ENCODE measurements at regions of chr14 and their contacts with region 1.

Region 1: GRCh38 chr14:24875991-24876878 is 173.7 kb downstream of the STXBP6 start:
- DNase-seq: no peak
- ATAC-seq: no peak
- H3K4me3 ChIP-seq: no peak overlapping the region
- H3K27ac ChIP-seq: no peak overlapping the region
- H3K4me1 ChIP-seq: peaks cover 69% of the 10 kb centered on the region
- H3K27me3 ChIP-seq: no peaks in the 10 kb centered on the region
- CTCF ChIP-seq: no peak
- EP300 ChIP-seq: no peak
- POLR2A ChIP-seq: no peak
- RAD21 ChIP-seq: no peak

Region 2: GRCh38 chr14:24887623-24888293 is 11.5 kb after region 1 on chr14:
- CTCF ChIA-PET with region 1: no interaction called
- POLR2A ChIA-PET with region 1: interaction called, 6 read pairs
- in situ Hi-C with region 1: no loop called
- intact Hi-C with region 1: loop called (anchors 1 kb)
- DNase-seq: no peak
- ATAC-seq: no peak
- H3K4me3 ChIP-seq: no peak overlapping the region
- H3K27ac ChIP-seq: no peak overlapping the region
- H3K4me1 ChIP-seq: peaks cover 49% of the 10 kb centered on the region
- H3K27me3 ChIP-seq: no peaks in the 10 kb centered on the region
- CTCF ChIP-seq: no peak
- EP300 ChIP-seq: no peak; a peak in 1 of 4 replicates
- POLR2A ChIP-seq: no peak
- RAD21 ChIP-seq: no peak

Region 3: DNA sequence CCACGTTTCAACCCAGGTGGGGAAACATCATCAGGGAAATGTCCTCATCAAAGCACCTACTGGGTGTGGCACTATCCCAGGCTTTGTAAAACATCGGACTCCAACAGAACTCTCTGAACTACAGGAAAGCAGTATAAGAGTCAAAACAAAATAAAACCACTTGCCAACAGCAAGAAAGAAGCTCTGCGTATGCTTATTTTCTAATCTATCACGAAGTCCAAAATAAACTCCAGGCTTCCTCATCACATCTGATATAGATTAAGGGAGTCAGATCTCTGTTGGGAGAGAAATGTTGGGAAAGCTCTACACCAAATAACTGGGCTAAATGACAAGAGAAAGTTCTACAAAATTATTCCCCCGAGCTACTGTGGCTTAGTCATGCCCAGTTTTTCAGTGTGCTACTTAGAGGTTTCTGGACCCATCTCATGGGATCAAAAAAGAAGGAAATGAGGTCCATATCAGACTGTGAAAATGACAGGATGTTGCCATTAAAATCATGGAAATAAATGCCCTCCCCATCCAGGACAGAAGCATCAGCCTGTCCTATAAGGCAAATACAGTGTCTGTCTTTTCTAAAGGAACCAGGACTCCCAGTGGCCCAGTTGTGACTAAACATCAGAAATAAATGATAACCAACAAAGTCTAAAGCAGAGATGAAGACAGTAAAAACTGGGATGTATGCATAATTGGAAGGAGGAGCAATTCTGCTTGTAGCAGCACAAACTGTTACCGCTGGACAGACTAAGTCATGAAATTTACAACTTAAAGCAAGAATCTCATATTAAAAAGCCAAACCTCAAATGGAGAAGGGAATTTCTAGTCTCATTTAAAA is 24.2 kb after region 1 on chr14:
- CTCF ChIA-PET with region 1: no interaction called
- POLR2A ChIA-PET with region 1: no interaction called
- in situ Hi-C with region 1: no loop called
- intact Hi-C with region 1: no loop called
- DNase-seq: no peak
- ATAC-seq: no peak
- H3K4me3 ChIP-seq: no peak overlapping the region
- H3K27ac ChIP-seq: no peak overlapping the region
- H3K4me1 ChIP-seq: peaks cover 6% of the 10 kb centered on the region; the same call in 1 of the 2 replicates
- H3K27me3 ChIP-seq: no peaks in the 10 kb centered on the region; a peak in 1 of 5 replicates
- CTCF ChIP-seq: no peak
- EP300 ChIP-seq: no peak
- POLR2A ChIP-seq: no peak
- RAD21 ChIP-seq: no peak